ENCODE measurements at regions of chr11 and their contacts with region 1.

Region 1: GRCh38 chr11:11813288-11813962 is 28.3 kb upstream of the USP47 start:
- DNase-seq: no peak
- H3K4me3 ChIP-seq: no peak overlapping the region
- H3K27ac ChIP-seq: no peak overlapping the region
- H3K4me1 ChIP-seq: no peaks in the 10 kb centered on the region
- H3K27me3 ChIP-seq: no peaks in the 10 kb centered on the region
- CTCF ChIP-seq: no peak
- POLR2A ChIP-seq: no peak

Region 2: GRCh38 chr11:11848891-11849746 is 35.7 kb after region 1 on chr11:
- intact Hi-C with region 1: no loop called
- DNase-seq: peak; percentile 60 to 65
- H3K4me3 ChIP-seq: no peak overlapping the region
- H3K27ac ChIP-seq: peak overlapping the region in 2 of 3 donors; percentile 3 to 13
- H3K4me1 ChIP-seq: peaks cover 44 to 65% of the 10 kb centered on the region in 2 donors
- H3K27me3 ChIP-seq: no peaks in the 10 kb centered on the region
- CTCF ChIP-seq: peak in 4 of 6 experiments; percentile 45 to 60 (median 60)
- POLR2A ChIP-seq: no peak

Region 3: GRCh38 chr11:12274558-12275197 is 461.3 kb after region 1 on chr11:
- intact Hi-C with region 1: loop called (anchors 10 kb)
- DNase-seq: no peak
- H3K4me3 ChIP-seq: no peak overlapping the region
- H3K27ac ChIP-seq: no peak overlapping the region
- H3K4me1 ChIP-seq: peaks cover 8 to 11% of the 10 kb centered on the region in 2 donors
- H3K27me3 ChIP-seq: no peaks in the 10 kb centered on the region
- CTCF ChIP-seq: no peak
- POLR2A ChIP-seq: no peak